Transverse colon (tissue), 4 donors: ENCODE measurements at regions of chr12 and their contacts with region 1.

Region 1: DNA sequence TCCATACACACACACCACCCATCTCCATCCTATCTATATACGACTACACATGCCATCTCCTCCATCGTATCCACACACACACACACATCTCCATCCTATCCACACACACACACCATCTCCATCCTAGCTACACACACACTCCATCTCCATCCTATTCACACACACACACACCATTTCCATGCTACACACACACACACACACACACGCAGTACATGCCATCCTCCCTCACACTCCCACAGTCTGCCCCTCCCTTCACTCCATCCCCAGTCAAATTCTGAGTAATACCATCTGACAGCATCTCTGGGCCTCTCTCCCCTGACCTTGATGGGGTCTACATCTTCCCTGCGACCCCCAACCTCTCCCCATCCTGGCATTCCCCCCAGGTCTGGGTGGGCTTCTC is 193.8 kb upstream of the LHX5 start:
- DNase-seq: no peak
- H3K4me3 ChIP-seq: no peak overlapping the region
- H3K27ac ChIP-seq: no peak overlapping the region
- H3K4me1 ChIP-seq: no peaks in the 10 kb centered on the region
- H3K27me3 ChIP-seq: peaks cover 27% of the 10 kb centered on the region
- CTCF ChIP-seq: no peak
- EP300 ChIP-seq: no peak
- POLR2A ChIP-seq: no peak

Region 2: GRCh38 chr12:113537751-113538087 is 127.7 kb before region 1 on chr12:
- in situ Hi-C with region 1: no loop called
- intact Hi-C with region 1: no loop called
- DNase-seq: no peak
- H3K4me3 ChIP-seq: no peak overlapping the region
- H3K27ac ChIP-seq: no peak overlapping the region
- H3K4me1 ChIP-seq: no peaks in the 10 kb centered on the region
- H3K27me3 ChIP-seq: peaks cover 10% of the 10 kb centered on the region
- CTCF ChIP-seq: no peak
- EP300 ChIP-seq: no peak
- POLR2A ChIP-seq: no peak

Region 3: DNA sequence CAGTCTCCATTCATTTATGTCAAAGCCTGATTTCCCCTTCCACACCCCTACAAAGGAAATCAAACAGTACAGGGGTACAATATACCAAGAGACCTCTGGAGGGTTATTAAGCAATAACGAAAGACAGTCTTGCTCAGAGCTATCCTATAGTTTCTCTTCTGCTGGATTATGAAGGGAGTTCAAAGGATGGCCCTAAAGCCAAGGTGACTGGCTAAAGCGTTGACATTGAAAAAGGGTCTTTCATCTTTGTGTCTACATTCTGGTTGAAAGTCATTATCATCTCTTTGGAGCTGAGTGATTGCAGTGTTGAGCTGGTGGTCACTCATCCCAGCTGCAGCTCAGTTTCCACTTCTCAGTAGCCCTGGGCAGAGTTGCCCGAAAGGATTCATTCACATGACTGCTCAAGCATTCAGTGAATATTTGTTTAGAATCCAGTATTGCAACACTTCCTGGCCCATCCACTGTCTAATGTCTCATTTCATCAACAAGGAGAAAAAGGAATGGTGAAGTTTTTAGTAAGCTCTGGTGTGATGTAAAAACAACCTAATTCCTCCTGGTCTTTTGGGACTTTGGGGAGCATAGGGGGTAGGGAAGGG is 759.7 kb after region 1 on chr12:
- in situ Hi-C with region 1: no loop called
- intact Hi-C with region 1: loop called (anchors 5 kb)
- DNase-seq: no peak
- H3K4me3 ChIP-seq: no peak overlapping the region
- H3K27ac ChIP-seq: no peak overlapping the region
- H3K4me1 ChIP-seq: no peaks in the 10 kb centered on the region
- H3K27me3 ChIP-seq: peaks cover 39% of the 10 kb centered on the region
- CTCF ChIP-seq: no peak
- EP300 ChIP-seq: no peak
- POLR2A ChIP-seq: no peak